ENCODE measurements at regions of chr2 and their contacts with region 1.

Region 1: DNA sequence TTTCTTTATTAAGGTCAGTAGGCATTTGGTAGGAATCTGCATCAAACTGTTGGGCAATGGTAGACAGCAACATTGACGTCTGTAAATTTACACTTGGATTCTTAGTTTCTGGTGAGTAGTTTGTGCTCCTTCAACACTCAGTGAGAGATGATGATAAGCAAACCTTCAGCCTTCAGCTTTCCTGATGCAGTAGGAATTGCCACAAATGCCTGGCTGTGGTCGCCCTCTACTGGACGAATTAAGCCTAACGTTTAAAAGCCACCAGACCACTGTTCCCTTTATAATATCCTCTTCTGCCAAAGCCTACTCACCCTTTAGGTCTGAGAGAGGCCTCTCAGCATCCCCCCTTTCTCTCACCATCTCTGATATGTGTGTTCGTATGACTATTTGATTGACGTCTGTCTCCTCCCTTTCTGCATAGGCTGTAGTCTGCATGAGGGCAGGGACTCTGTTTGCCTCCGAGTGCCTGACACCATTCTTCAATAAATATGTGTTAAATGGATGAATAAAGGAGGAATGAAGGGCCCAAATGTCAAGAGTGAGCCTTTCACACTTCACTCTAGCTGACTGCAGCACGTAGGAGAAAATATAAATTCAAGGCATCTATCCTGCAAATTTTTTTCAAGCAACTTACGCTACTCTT is 47.0 kb upstream of the PLEKHM3 start:
- DNase-seq: peak; percentile 70
- ATAC-seq: peak; percentile 96
- H3K4me3 ChIP-seq: no peak overlapping the region
- H3K27ac ChIP-seq: no peak overlapping the region
- H3K4me1 ChIP-seq: no peaks in the 10 kb centered on the region
- H3K27me3 ChIP-seq: no peaks in the 10 kb centered on the region; the same call in 1 of the 2 replicates
- CTCF ChIP-seq: peak; percentile 92

Region 2: DNA sequence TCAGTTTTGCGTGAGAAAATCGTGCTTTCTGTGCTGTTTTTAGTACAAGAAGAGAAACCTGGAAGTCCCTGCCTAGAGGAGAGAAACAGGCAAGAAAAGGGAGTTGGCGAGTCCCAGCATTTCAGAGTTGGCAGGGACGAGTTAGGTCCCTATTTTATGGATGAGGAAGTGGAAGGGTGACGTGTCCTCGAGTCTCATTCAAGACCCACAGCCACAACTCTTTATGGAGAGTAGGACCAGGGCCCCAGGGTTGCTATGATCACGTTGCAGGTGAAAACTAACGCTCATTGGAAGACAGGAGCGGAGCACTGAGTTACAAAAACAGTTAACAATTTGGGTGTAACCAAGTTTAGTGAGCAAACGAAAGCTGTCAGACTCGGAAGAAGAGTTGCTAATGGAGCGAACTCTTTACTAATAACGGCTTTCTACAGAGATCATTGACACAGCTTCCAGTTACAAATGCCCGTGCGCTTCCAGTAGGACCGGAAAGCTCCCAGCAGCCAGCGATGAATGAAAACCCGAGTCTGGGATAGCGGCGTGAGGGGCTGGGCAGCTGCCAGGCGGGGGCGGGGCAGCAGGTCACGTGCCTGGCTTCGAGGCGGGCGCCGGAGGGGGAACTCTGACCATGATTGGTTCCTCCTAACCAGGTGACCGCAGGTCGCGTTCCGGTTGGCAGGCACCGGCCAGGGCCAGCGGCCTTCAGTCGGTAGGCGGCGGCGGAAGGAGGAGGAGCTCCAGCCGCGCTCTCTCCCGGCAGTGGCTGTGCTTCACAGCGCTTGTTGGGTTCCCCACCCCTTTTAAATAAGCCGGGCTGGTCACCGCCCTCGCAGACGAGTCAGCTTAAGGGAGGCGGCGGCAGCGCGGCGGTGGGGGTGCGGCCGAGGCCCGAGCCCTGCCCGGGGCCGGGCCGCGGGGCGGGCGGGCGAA is 361.3 kb before region 1 on chr2 and contains the start of gene CCNYL1:
- CTCF ChIA-PET with region 1: interaction called, 12 read pairs
- POLR2A ChIA-PET with region 1: no interaction called
- in situ Hi-C with region 1: no loop called
- intact Hi-C with region 1: no loop called
- DNase-seq: peak; percentile 88
- ATAC-seq: peak; percentile 98
- H3K4me3 ChIP-seq: peak within 1 kb of the TSS; percentile 70 to 88
- H3K27ac ChIP-seq: peak within 1 kb of the TSS; percentile 91
- H3K4me1 ChIP-seq: peaks cover 7% of the 10 kb centered on the region
- H3K27me3 ChIP-seq: no peaks in the 10 kb centered on the region
- CTCF ChIP-seq: no peak
- total RNA-seq, gene CCNYL1: 31.4 TPM

Region 3: GRCh38 chr2:207974216-207974605 is 98.2 kb before region 1 on chr2:
- CTCF ChIA-PET with region 1: interaction called, 12 read pairs
- POLR2A ChIA-PET with region 1: no interaction called
- in situ Hi-C with region 1: no loop called
- intact Hi-C with region 1: no loop called
- DNase-seq: no peak
- ATAC-seq: no peak
- H3K4me3 ChIP-seq: no peak overlapping the region
- H3K27ac ChIP-seq: no peak overlapping the region
- H3K4me1 ChIP-seq: no peaks in the 10 kb centered on the region
- H3K27me3 ChIP-seq: no peaks in the 10 kb centered on the region; the same call in 1 of the 2 replicates
- CTCF ChIP-seq: no peak

Region 4: DNA sequence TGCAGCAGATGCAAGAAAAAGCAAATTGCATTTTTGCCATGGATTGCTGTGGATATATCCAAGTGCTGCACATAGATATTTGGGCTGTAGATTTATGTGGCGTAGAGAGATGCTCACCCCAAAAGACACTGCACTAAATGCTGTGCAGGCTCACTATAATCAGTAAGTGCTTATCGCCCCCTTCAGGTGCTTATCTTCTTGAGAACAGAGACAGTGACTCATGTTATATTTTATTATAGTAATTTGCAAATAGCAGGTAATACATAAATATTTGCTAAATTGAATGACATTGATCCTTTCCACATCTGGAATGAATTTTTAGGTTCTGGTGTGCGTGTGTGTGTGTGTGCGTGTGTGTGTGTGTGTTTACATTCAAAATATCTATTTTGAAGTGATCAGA is 10.3 kb before region 1 on chr2:
- CTCF ChIA-PET with region 1: no interaction called
- POLR2A ChIA-PET with region 1: no interaction called
- in situ Hi-C with region 1: no loop called
- intact Hi-C with region 1: no loop called
- DNase-seq: no peak
- ATAC-seq: peak; percentile 83
- H3K4me3 ChIP-seq: no peak overlapping the region
- H3K27ac ChIP-seq: no peak overlapping the region
- H3K4me1 ChIP-seq: no peaks in the 10 kb centered on the region
- H3K27me3 ChIP-seq: no peaks in the 10 kb centered on the region
- CTCF ChIP-seq: peak; percentile 61

Region 5: GRCh38 chr2:208269091-208269490 is 196.7 kb after region 1 on chr2:
- CTCF ChIA-PET with region 1: no interaction called
- POLR2A ChIA-PET with region 1: no interaction called
- in situ Hi-C with region 1: no loop called
- intact Hi-C with region 1: no loop called
- DNase-seq: no peak
- ATAC-seq: no peak
- H3K4me3 ChIP-seq: no peak overlapping the region
- H3K27ac ChIP-seq: no peak overlapping the region
- H3K4me1 ChIP-seq: peaks cover 18% of the 10 kb centered on the region
- H3K27me3 ChIP-seq: no peaks in the 10 kb centered on the region
- CTCF ChIP-seq: peak; percentile 25

Measured in Panc1 (cell line).